ENCODE measurements at regions of chr22 and their contacts with region 1.

Region 1: GRCh38 chr22:49789289-49790141 is 38.2 kb downstream of the BRD1 start:
- DNase-seq: peak; percentile 75 to 80
- ATAC-seq: peak in 3 of 4 donors; percentile 10 to 17 (median 11)
- H3K4me3 ChIP-seq: peak overlapping the region; percentile 7
- H3K27ac ChIP-seq: peak overlapping the region; percentile 70
- H3K4me1 ChIP-seq: peaks cover 74% of the 10 kb centered on the region
- H3K27me3 ChIP-seq: no peaks in the 10 kb centered on the region
- CTCF ChIP-seq: no peak

Region 2: GRCh38 chr22:49820984-49821383 is 31.5 kb after region 1 on chr22:
- intact Hi-C with region 1: loop called (anchors 5 kb)
- DNase-seq: no peak
- ATAC-seq: peak; percentile 42 to 71 (median 53)
- H3K4me3 ChIP-seq: no peak overlapping the region
- H3K27ac ChIP-seq: no peak overlapping the region
- H3K4me1 ChIP-seq: peaks cover 34% of the 10 kb centered on the region
- H3K27me3 ChIP-seq: no peaks in the 10 kb centered on the region
- CTCF ChIP-seq: no peak

Region 3: DNA sequence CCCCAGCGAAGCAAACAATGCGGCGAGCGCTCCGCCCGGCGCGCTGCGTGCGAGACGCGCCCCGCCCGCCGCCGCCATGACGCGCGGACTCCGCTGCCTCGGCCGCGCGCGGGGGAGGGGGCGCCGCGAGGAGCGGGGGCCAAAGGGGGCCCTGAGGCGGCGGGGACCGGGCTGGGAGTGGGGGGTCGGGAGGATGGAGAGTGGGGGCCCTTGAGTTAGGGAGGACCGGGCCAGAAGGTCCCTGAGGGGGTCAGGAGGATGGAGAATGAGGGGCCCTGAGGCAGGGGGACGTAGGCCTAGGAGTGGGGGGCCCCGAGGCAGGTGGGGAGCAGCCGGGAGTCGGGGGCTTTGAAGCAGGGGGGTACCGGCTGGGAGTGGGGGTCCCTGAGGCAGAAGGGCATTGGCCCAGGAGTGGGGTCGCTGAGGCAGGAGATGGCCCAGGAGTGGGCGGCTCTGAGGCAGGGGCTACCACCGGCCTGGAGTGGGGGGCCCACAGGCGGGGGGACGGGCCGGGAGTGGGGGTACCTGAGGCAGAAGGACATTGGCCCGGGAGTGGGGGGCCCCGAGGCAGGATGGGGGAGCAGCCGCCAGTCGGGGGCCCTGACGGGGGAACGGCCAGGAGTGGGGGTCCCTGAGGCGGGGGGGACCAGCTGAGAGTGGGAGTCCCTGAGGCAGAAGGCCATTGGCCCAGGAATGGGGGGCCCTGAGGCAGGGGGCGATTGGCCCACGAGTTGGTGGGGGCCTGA is 38.5 kb after region 1 on chr22 and contains the start of gene BRD1:
- intact Hi-C with region 1: loop called (anchors 5 kb)
- DNase-seq: peak; percentile 73 to 75
- ATAC-seq: peak; percentile 64 to 81 (median 72)
- H3K4me3 ChIP-seq: peak within 1 kb of the TSS; percentile 71
- H3K27ac ChIP-seq: peak within 1 kb of the TSS; percentile 80
- H3K4me1 ChIP-seq: peaks cover 25% of the 10 kb centered on the region
- H3K27me3 ChIP-seq: no peaks in the 10 kb centered on the region
- CTCF ChIP-seq: no peak
- total RNA-seq, gene BRD1: 16.9 to 22.9 (median 20.3) TPM